Caco-2 (cell line): ENCODE measurements at regions of chr7 and their contacts with region 1.

Region 1: GRCh38 chr7:117582219-117582704 is 102.4 kb downstream of the CFTR start:
- DNase-seq: peak; percentile 85 to 91
- H3K4me3 ChIP-seq: no peak overlapping the region
- H3K4me3 Mint-ChIP-seq: peak overlapping the region; percentile 22
- H3K27ac Mint-ChIP-seq: peak overlapping the region; percentile 82
- H3K4me1 ChIP-seq: peaks cover 73% of the 10 kb centered on the region
- H3K4me1 Mint-ChIP-seq: peaks cover 53% of the 10 kb centered on the region
- H3K27me3 ChIP-seq: no peaks in the 10 kb centered on the region
- H3K27me3 Mint-ChIP-seq: no peaks in the 10 kb centered on the region
- CTCF ChIP-seq: no peak

Region 2: GRCh38 chr7:117489911-117490310 is 92.4 kb before region 1 on chr7:
- CTCF ChIA-PET with region 1: no interaction called
- POLR2A ChIA-PET with region 1: no interaction called
- intact Hi-C with region 1: loop called (anchors 5 kb)
- DNase-seq: peak; percentile 38 to 62
- H3K4me3 ChIP-seq: no peak overlapping the region
- H3K4me3 Mint-ChIP-seq: peak overlapping the region; percentile 47
- H3K27ac Mint-ChIP-seq: peak overlapping the region; percentile 31
- H3K4me1 ChIP-seq: peaks cover 70% of the 10 kb centered on the region
- H3K4me1 Mint-ChIP-seq: peaks cover 71% of the 10 kb centered on the region
- H3K27me3 ChIP-seq: no peaks in the 10 kb centered on the region
- H3K27me3 Mint-ChIP-seq: no peaks in the 10 kb centered on the region
- CTCF ChIP-seq: no peak